Activated T-helper 2 cell treated with anti-CD3 and anti-CD28 coated beads, Interferon-gamma antibody, Interleukin-2, Interleukin-4, amounts not matched to agents 10 μg/mL and 5 μg/mL and 100 μg/mL, durations not matched to agents 14 hours and 24 hours and 36 hours (primary cell): ENCODE measurements at regions of chr2 and their contacts with region 1.

Region 1: GRCh38 chr2:136238286-136239078 is 120.5 kb upstream of the CXCR4 start:
- DNase-seq: peak; percentile 20
- H3K4me3 Mint-ChIP-seq: no peak overlapping the region
- H3K27ac Mint-ChIP-seq: peak overlapping the region; percentile 88
- H3K4me1 Mint-ChIP-seq: peaks cover 53% of the 10 kb centered on the region
- H3K27me3 Mint-ChIP-seq: no peaks in the 10 kb centered on the region

Region 2: DNA sequence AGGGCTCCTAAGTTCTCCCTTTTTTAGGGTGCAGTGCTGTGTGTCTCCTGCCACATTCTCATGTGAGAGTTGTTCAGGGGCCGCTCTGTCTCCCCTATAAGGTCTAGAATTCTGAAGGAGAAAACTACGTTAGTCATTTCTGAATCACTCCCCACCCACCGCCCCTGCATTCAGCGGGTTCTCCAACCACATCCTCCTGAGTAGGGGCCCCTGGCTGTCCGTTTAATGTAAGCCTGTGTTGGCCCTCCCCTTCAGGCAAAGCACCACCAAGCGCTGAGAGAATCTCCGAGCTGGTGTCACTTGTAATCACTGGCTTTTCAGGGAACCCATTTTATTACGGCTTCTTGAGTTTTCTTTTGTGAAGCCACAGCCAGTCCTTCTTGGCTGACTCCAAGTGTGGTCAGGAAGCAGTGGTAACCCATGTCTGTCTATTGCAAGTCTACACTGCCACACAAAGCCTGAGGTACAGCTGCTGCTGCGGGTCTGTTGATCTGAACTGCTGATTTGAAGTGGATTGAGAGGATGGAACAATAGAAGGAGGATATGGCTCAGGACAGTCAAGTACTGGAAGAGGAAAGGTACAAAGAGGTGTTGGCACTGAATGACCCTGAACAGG is 418.4 kb before region 1 on chr2:
- intact Hi-C with region 1: loop called (anchors 2 kb)
- DNase-seq: peak; percentile 80
- H3K4me3 Mint-ChIP-seq: peak overlapping the region; percentile 71
- H3K27ac Mint-ChIP-seq: peak overlapping the region; percentile 87
- H3K4me1 Mint-ChIP-seq: peaks cover 39% of the 10 kb centered on the region
- H3K27me3 Mint-ChIP-seq: no peaks in the 10 kb centered on the region

Region 3: GRCh38 chr2:136143603-136144451 is 94.7 kb before region 1 on chr2:
- intact Hi-C with region 1: no loop called
- DNase-seq: no peak
- H3K4me3 Mint-ChIP-seq: no peak overlapping the region
- H3K27ac Mint-ChIP-seq: no peak overlapping the region
- H3K4me1 Mint-ChIP-seq: peaks cover 10% of the 10 kb centered on the region
- H3K27me3 Mint-ChIP-seq: peaks cover 51% of the 10 kb centered on the region

Region 4: GRCh38 chr2:136212423-136213378 is 25.8 kb before region 1 on chr2:
- intact Hi-C with region 1: loop called (anchors 1 kb)
- DNase-seq: no peak
- H3K4me3 Mint-ChIP-seq: no peak overlapping the region
- H3K27ac Mint-ChIP-seq: peak overlapping the region; percentile 52
- H3K4me1 Mint-ChIP-seq: peaks cover 46% of the 10 kb centered on the region
- H3K27me3 Mint-ChIP-seq: peaks cover 1% of the 10 kb centered on the region

Region 5: GRCh38 chr2:136281281-136282114 is 43.0 kb after region 1 on chr2:
- intact Hi-C with region 1: loop called (anchors 5 kb)
- DNase-seq: peak; percentile 25
- H3K4me3 Mint-ChIP-seq: no peak overlapping the region
- H3K27ac Mint-ChIP-seq: peak overlapping the region; percentile 77
- H3K4me1 Mint-ChIP-seq: peaks cover 45% of the 10 kb centered on the region
- H3K27me3 Mint-ChIP-seq: no peaks in the 10 kb centered on the region

Region 6: DNA sequence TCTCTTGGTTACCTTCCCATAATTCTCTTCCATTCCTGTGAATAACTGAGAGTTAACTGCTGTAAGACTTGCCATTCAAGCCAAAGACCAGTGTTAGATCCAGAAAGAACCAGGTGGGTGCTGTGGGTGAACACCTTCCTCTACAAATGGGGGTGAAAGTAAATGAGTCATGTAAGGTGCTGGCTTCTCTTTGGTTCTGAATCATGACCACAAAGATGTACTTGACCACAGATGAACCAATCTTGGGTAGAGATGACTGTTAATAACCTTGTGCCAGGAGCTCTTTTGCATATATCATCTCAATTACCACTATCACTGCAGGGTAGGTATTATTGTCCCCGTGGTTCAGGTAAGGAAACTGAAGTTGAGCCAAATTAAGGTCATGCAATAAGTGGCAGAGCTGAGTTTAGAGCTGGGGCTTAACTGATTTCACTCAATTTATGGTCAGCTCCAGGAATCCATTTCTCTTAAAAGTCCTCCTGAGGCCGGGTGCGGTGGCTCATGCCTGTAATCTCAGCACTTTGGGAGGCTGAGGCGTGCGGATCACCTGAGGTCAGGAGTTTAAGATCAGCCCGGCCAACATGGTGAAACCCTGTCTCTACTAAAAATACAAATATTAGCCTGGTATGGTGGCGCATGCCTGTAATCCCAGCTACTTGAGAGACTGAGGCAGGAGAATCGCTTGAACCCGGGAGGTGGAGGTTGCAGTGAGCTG is 124.4 kb after region 1 on chr2:
- intact Hi-C with region 1: loop called (anchors 5 kb)
- DNase-seq: no peak
- H3K4me3 Mint-ChIP-seq: peak overlapping the region; percentile 2
- H3K27ac Mint-ChIP-seq: peak overlapping the region; percentile 35
- H3K4me1 Mint-ChIP-seq: peaks cover 49% of the 10 kb centered on the region
- H3K27me3 Mint-ChIP-seq: peaks cover 1% of the 10 kb centered on the region

Region 7: DNA sequence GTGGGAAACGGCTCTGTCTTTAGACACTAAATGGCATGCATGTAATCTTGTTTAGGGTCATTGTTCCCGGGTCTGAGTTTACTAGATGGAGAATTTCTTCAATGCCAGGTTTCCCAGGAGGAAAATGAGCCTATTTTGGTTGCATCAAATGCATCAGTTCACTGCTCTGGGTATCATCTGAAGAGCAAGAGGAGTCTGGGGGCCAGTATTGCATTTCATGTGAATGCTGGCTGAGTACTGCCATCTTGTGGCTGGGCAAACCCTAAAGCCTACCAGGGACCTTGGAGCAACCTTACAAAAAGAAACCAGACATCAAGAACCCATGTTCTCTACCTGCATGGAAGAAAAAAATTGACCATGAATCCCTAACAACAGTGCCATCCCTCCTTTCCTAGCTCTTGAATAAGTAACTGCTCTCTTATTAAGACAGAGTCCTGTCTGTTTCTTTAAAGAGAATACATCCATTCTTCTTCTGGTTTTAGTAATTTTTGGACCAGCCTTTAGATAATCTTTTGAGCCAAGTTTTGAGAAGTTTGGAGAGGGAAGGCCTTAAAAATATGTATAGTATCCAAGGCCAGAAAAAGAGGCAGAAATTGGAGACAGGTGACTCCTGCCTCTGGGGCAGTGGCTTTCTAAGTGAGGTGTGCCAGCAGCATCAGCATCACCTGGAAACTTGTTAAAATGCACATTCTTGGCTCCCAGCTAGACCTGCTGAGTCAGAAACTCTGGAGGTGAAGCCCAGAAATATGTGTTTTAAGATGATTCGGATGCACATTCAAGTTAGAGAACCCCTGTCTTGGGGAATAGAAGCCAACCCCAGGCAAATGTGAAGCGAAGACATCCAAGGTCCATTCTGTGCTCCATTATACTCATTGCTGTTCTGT is 140.5 kb after region 1 on chr2:
- intact Hi-C with region 1: loop called (anchors 1 kb)
- DNase-seq: peak; percentile 66
- H3K4me3 Mint-ChIP-seq: no peak overlapping the region
- H3K27ac Mint-ChIP-seq: no peak overlapping the region
- H3K4me1 Mint-ChIP-seq: peaks cover 82% of the 10 kb centered on the region
- H3K27me3 Mint-ChIP-seq: no peaks in the 10 kb centered on the region